ENCODE measurements at regions of chr20 and their contacts with region 1.

Region 1: DNA sequence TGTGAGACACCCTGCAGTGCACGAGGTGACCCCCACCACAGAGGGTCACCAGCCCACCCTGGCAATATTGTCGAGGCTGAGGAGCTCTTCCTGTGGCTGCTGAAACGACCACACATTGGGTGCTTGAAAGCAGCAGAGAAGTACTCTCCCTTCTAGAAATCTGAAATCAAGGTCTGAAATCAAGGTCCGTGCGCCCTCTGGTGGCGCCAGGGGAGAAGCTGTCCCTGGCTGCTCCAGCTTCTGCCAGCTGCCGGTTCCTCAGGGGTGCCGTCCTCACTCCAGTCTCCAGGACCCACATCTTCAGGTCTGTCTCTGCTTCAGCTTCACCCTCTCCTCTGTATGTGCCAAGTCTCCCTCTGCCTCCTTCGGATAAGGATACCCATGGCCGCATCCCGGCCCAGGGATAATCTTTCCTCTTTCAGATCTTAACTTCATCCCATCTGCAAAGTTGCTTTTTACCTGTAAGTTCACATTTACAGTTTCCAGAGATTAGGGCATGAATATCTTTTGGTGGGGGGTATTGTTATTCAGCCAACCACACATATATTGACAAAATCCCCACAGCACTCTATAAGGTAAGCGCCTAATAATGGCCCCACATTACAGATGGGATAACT is 108.3 kb upstream of the PHACTR3 start:
- DNase-seq: peak; percentile 77
- H3K4me3 Mint-ChIP-seq: no peak overlapping the region
- H3K27ac Mint-ChIP-seq: no peak overlapping the region
- H3K4me1 Mint-ChIP-seq: no peaks in the 10 kb centered on the region
- H3K27me3 Mint-ChIP-seq: peaks cover 10% of the 10 kb centered on the region

Region 2: GRCh38 chr20:58870239-58871014 is 625.6 kb before region 1 on chr20:
- CTCF ChIA-PET with region 1: no interaction called
- intact Hi-C with region 1: loop called (anchors 2 kb)
- DNase-seq: peak; percentile 67
- H3K4me3 Mint-ChIP-seq: no peak overlapping the region
- H3K27ac Mint-ChIP-seq: no peak overlapping the region
- H3K4me1 Mint-ChIP-seq: peaks cover 4% of the 10 kb centered on the region
- H3K27me3 Mint-ChIP-seq: no peaks in the 10 kb centered on the region

Region 3: DNA sequence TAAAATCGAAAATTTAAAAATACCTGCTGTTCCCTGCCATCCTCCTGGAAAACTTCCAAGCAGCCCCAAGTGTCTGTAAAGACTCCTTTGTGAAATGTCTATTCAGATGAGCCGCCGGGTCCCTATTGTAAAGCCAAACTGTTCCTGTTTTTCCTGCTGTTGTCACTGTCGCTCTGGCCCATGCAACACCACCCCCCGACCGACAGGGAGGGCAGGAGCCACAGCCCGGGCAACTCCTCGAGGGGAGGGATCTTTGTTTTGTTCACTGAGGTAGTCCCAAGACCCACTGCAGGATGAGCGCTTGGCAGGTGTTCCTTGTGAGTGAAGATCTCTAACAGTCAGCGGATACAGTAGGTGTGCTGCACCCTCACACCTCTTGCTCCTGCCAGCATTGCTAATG is 23.9 kb before region 1 on chr20:
- CTCF ChIA-PET with region 1: interaction called, 12 read pairs
- intact Hi-C with region 1: no loop called
- DNase-seq: no peak
- H3K4me3 Mint-ChIP-seq: no peak overlapping the region
- H3K27ac Mint-ChIP-seq: no peak overlapping the region
- H3K4me1 Mint-ChIP-seq: no peaks in the 10 kb centered on the region
- H3K27me3 Mint-ChIP-seq: peaks cover 3% of the 10 kb centered on the region

Region 4: DNA sequence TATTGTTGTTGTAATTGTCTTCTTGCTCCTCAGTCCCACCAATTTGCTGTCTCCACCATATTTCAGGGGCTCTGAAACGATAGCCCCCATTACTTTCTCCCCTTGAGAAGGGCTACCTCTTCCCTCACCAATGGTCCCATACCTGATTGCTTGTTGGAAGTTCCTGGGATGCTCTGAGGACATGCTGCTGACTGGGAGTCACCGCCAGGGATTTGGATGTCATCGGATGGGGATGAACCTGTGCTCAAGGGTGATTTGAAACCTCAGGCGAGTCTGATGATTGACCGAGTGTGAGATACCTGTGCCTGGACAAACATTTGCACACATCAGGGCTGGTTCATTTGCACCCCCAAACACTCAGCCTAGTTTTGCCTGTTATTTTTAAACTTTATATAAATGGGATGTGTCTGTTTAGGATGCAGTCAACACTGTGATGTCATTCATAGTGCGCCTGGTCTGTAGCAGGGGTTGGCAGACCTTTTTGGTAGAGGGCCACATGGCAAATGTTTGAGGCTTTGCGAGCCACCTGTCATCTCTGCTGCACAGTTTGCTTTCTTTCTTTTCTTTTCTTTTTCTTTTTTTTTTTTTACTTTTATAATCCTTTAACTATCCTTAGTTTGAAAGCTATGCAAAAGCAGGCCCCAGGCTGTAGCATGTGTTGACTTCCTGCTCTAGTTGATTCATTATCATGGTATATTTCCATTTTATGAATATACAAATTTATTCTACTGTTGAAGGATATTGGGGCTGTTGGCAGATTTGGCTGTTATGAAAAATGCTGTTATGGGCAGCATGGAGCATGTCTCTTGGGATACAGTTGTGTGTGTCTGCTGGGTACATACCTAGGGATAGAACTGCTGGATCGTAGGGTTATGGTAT is 10.2 kb before region 1 on chr20:
- CTCF ChIA-PET with region 1: interaction called, 13 read pairs
- intact Hi-C with region 1: no loop called
- DNase-seq: no peak
- H3K4me3 Mint-ChIP-seq: no peak overlapping the region
- H3K27ac Mint-ChIP-seq: no peak overlapping the region
- H3K4me1 Mint-ChIP-seq: no peaks in the 10 kb centered on the region
- H3K27me3 Mint-ChIP-seq: peaks cover 21% of the 10 kb centered on the region

Region 5: DNA sequence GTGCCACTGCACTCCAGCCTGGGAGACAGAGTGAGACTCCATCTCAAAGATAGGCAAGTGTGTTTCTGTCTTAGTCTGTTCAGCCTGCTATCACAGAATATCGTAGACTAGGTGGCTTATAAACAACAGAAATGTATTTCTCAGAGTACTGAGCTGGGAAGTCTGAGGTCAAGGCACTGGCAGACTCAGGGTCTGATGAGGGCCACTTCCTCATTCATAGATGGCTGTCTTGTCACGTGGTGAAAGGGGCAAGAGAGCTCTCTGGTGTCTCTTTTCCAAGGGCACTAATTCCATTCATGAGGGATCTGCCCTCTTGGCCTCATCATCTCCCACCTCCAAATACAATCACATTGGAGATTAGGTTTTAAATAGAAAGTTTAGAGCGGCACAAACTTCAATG is 12.7 kb after region 1 on chr20:
- CTCF ChIA-PET with region 1: interaction called, 18 read pairs
- intact Hi-C with region 1: no loop called
- DNase-seq: no peak
- H3K4me3 Mint-ChIP-seq: no peak overlapping the region
- H3K27ac Mint-ChIP-seq: no peak overlapping the region
- H3K4me1 Mint-ChIP-seq: no peaks in the 10 kb centered on the region
- H3K27me3 Mint-ChIP-seq: peaks cover 6% of the 10 kb centered on the region